Activated CD4-positive, alpha-beta T cell treated with anti-CD3 and anti-CD28 coated beads for 36 hours (primary cell): ENCODE measurements at regions of chr9 and their contacts with region 1.

Region 1: DNA sequence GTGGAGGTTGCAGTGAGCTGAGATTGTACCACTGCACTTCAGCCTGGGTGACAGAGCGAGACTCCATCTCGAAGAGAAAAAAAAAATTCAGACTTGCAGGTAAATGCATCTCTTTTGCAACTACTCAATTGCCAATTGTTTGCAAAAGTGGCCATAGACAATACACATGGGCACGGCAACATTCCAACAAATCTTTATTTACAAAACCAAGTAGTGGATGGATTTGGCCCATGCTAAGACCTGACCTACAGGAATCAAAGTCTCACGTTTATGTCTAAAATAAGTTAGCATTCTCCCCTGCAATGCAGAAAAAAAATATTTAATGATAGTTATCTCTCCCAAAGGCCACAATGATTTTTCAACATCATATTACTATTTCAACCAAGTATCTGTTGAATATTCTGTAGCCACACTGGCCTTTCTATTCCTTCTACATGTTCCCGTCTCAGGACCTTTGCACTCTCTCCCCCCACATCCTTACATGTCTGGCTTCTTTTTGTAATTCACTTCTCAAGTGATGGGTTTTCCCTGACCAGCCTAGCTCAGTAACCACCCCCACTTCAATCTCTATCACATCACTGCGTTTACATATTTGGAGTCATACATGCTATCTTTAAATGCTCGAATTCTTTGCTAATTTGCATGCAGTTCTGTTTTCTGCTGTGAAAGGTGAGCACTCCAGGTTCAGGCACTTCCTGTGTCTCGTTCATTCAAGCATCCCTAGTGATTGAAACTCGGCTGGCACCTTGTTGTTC is 54.2 kb downstream of the FNBP1 start:
- DNase-seq: peak; percentile 54
- ATAC-seq: peak; percentile 55
- H3K4me3 Mint-ChIP-seq: peak overlapping the region; percentile 15
- H3K27ac Mint-ChIP-seq: peak overlapping the region; percentile 84
- H3K4me1 Mint-ChIP-seq: peaks cover 86% of the 10 kb centered on the region
- H3K27me3 Mint-ChIP-seq: no peaks in the 10 kb centered on the region

Region 2: GRCh38 chr9:129932303-129933151 is 56.3 kb before region 1 on chr9:
- CTCF ChIA-PET with region 1: no interaction called
- POLR2A ChIA-PET with region 1: interaction called, 6 read pairs
- intact Hi-C with region 1: loop called (anchors 2 kb)
- DNase-seq: no peak
- ATAC-seq: peak; percentile 31
- H3K4me3 Mint-ChIP-seq: peak overlapping the region; percentile 59
- H3K27ac Mint-ChIP-seq: peak overlapping the region; percentile 92
- H3K4me1 Mint-ChIP-seq: peaks cover 69% of the 10 kb centered on the region
- H3K27me3 Mint-ChIP-seq: no peaks in the 10 kb centered on the region

Region 3: DNA sequence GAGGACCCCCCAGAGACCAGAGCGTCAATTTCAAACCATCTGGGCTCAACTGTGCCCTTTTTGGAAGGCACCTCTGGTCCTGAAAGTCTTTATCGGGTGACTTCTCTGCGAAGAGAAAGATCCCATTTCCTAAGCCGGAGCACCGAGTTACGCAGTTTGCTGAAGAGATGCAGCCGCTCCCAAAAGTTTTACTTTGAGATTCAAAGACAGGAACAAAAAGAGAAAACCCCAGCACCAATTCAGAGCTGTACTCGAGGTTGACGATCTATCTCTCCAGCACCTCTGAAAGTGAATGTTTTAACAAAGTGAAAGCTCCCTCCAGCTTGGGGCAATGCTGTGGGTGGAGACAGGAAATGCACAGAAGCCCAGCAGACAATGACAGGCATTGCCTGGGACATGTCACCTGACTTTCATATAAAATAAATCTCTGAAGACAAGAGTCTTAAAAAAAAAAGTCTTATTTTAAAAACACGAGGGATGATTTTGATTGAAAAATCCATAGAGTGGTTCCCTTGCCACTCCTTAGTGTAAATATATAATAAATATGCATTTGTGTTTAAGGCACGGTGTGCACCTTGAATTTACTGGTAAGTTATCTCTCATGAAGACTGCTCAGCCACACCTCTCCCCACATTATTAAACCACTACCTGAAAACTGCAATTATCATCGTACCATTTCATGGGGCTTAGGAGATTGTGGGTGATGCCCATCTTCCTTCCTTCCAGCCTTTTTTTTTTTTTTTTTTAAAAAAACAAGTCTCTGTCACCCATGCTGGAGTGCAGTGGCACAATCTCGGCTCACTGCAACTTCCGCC is 25.7 kb before region 1 on chr9:
- CTCF ChIA-PET with region 1: interaction called, 12 read pairs
- POLR2A ChIA-PET with region 1: interaction called, 5 read pairs
- intact Hi-C with region 1: loop called in 1 of 2 experiments (anchors 2 kb)
- DNase-seq: peak; percentile 86
- ATAC-seq: peak; percentile 94
- H3K4me3 Mint-ChIP-seq: peak overlapping the region; percentile 76
- H3K27ac Mint-ChIP-seq: peak overlapping the region; percentile 96
- H3K4me1 Mint-ChIP-seq: peaks cover 87% of the 10 kb centered on the region
- H3K27me3 Mint-ChIP-seq: no peaks in the 10 kb centered on the region

Region 4: GRCh38 chr9:130010151-130010988 is 21.6 kb after region 1 on chr9:
- CTCF ChIA-PET with region 1: interaction called, 6 read pairs
- POLR2A ChIA-PET with region 1: interaction called, 16 read pairs
- intact Hi-C with region 1: no loop called
- DNase-seq: peak; percentile 64
- ATAC-seq: peak; percentile 69
- H3K4me3 Mint-ChIP-seq: peak overlapping the region; percentile 39
- H3K27ac Mint-ChIP-seq: peak overlapping the region; percentile 92
- H3K4me1 Mint-ChIP-seq: peaks cover 90% of the 10 kb centered on the region
- H3K27me3 Mint-ChIP-seq: no peaks in the 10 kb centered on the region

Region 5: GRCh38 chr9:130023144-130023787 is 34.5 kb after region 1 on chr9:
- CTCF ChIA-PET with region 1: interaction called, 7 read pairs
- POLR2A ChIA-PET with region 1: interaction called, 32 read pairs
- intact Hi-C with region 1: loop called in 1 of 2 experiments (anchors 2 kb)
- DNase-seq: no peak
- ATAC-seq: peak; percentile 59
- H3K4me3 Mint-ChIP-seq: peak overlapping the region; percentile 50
- H3K27ac Mint-ChIP-seq: peak overlapping the region; percentile 92
- H3K4me1 Mint-ChIP-seq: peaks cover 97% of the 10 kb centered on the region
- H3K27me3 Mint-ChIP-seq: no peaks in the 10 kb centered on the region

Region 6: DNA sequence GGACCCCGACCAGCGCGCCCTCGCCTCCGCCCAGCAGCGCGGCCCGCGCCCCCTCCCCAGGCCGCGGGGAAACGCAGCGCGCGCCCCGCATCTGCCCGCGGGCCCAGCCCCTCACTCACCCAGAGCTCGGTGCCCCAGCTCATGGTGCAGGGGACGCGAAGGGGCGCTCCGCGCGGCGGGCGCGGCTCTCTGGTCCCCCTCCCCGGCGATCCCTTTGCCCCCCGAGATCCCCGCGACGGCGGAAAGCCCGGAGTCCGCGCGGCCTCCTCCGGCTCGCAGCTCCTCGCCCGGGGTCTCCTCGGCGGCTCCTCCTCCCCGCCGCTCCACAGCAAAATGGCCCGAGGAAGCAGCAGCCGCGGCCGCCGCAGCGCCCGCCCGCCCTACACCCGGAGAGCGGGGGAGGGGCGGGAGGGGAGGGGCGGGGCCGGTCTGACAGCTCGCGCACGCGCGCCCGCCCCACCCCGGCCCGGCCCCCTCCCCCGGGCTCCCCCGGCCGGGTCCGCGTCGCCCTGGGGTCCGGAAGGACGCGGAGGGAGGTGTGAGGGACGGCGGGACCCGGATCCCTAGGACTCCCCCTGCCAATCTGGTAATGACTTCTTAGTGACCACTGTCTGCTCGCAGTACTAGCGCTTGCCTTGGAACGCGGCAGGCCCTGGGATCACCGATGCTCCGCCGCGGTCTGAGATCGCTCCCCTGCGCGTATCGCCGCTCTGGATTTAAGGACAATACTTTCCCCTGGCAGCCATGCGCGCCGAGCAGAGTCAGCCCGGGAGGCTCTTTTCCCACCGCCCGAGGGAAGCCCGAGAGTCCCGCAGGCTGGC is 54.3 kb after region 1 on chr9 and contains the start of gene FNBP1:
- CTCF ChIA-PET with region 1: interaction called, 11 read pairs
- POLR2A ChIA-PET with region 1: interaction called, 5 read pairs
- intact Hi-C with region 1: loop called in 1 of 2 experiments (anchors 2 kb)
- DNase-seq: peak; percentile 91
- ATAC-seq: peak; percentile 63
- H3K4me3 Mint-ChIP-seq: peak within 1 kb of the TSS; percentile 100
- H3K27ac Mint-ChIP-seq: peak within 1 kb of the TSS; percentile 100
- H3K4me1 Mint-ChIP-seq: peaks cover 33% of the 10 kb centered on the region
- H3K27me3 Mint-ChIP-seq: no peaks in the 10 kb centered on the region
- total RNA-seq, gene FNBP1: 254 to 354 TPM

Region 7: GRCh38 chr9:130426883-130427282 is 438.1 kb after region 1 on chr9:
- CTCF ChIA-PET with region 1: no interaction called
- POLR2A ChIA-PET with region 1: no interaction called
- intact Hi-C with region 1: no loop called
- DNase-seq: no peak
- ATAC-seq: no peak
- H3K4me3 Mint-ChIP-seq: no peak overlapping the region
- H3K27ac Mint-ChIP-seq: no peak overlapping the region
- H3K4me1 Mint-ChIP-seq: no peaks in the 10 kb centered on the region
- H3K27me3 Mint-ChIP-seq: peaks cover 2% of the 10 kb centered on the region

Region 8: GRCh38 chr9:131755541-131756198 is 1766.9 kb after region 1 on chr9:
- CTCF ChIA-PET with region 1: no interaction called
- POLR2A ChIA-PET with region 1: no interaction called
- intact Hi-C with region 1: no loop called
- DNase-seq: peak; percentile 95
- ATAC-seq: peak; percentile 98
- H3K4me3 Mint-ChIP-seq: no peak overlapping the region
- H3K27ac Mint-ChIP-seq: peak overlapping the region; percentile 29
- H3K4me1 Mint-ChIP-seq: peaks cover 21% of the 10 kb centered on the region
- H3K27me3 Mint-ChIP-seq: peaks cover 5% of the 10 kb centered on the region